ENCODE measurements at regions of chr13 and their contacts with region 1.

Region 1: GRCh38 chr13:75694722-75695121 is 58.6 kb downstream of the LMO7 start:
- DNase-seq: no peak
- H3K4me3 ChIP-seq: no peak overlapping the region
- H3K27ac ChIP-seq: no peak overlapping the region
- H3K4me1 ChIP-seq: no peaks in the 10 kb centered on the region
- H3K27me3 ChIP-seq: no peaks in the 10 kb centered on the region
- CTCF ChIP-seq: no peak

Region 2: GRCh38 chr13:75521956-75522355 is 172.8 kb before region 1 on chr13:
- CTCF ChIA-PET with region 1: no interaction called
- POLR2A ChIA-PET with region 1: no interaction called
- intact Hi-C with region 1: no loop called
- DNase-seq: no peak
- H3K4me3 ChIP-seq: no peak overlapping the region
- H3K27ac ChIP-seq: no peak overlapping the region
- H3K4me1 ChIP-seq: peaks cover 4% of the 10 kb centered on the region
- H3K27me3 ChIP-seq: no peaks in the 10 kb centered on the region
- CTCF ChIP-seq: no peak

Region 3: DNA sequence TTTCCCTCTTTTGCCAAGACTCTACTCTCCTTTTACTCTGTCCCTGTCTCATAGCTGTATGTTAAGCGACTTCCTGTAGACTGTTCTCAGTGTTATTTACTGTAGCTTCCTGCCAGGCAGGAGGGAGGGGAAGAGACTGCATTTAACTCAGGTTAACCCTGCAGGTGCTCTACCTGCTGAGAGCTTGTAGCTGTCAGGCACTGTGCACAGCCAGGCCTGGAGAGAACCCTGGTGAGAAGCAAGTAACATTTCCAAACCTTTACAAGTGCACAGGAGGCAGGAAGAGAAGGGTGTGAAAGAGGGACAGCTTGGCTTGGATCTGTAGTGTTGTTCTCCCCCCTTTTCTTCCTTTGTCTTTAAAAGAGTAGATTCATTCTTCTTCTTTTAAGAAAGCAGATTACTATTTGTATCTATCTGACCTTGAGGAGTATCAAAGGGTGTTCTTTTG is 108.5 kb after region 1 on chr13:
- CTCF ChIA-PET with region 1: interaction called, 3 read pairs
- POLR2A ChIA-PET with region 1: no interaction called
- intact Hi-C with region 1: loop called (anchors 5 kb)
- DNase-seq: no peak
- H3K4me3 ChIP-seq: no peak overlapping the region
- H3K27ac ChIP-seq: no peak overlapping the region
- H3K4me1 ChIP-seq: no peaks in the 10 kb centered on the region
- H3K27me3 ChIP-seq: no peaks in the 10 kb centered on the region
- CTCF ChIP-seq: no peak

Measured in A673 (cell line).